ENCODE measurements at regions of chr12 and their contacts with region 1.

Region 1: DNA sequence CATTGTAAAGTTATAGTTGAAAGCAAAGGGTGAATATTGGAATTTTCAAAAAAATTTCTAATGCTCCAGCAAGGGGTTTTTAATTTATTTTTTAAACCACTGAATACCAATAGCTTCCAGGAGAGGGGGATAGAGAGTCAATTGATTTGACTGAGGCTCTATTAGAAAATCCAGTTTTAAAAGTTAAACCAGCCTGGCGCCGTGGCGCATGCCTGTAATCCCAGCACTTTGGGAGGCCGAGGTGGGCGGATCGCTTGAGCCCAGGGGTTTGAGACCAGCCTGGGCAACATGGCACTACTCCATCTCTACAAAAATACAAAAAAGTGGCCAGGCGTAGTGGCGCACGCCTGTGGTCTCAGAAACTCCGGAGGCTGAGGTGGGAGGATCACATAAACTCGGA is 150.1 kb downstream of the SLC38A4 start:
- DNase-seq: peak; percentile 30
- ATAC-seq: no peak
- H3K4me3 ChIP-seq: no peak overlapping the region
- H3K27ac ChIP-seq: no peak overlapping the region
- H3K4me1 ChIP-seq: peaks cover 26% of the 10 kb centered on the region
- H3K27me3 ChIP-seq: no peaks in the 10 kb centered on the region
- CTCF ChIP-seq: peak; percentile 30; the same call in 1 of the 2 replicates
- EP300 ChIP-seq: no peak
- POLR2A ChIP-seq: no peak
- RAD21 ChIP-seq: peak; percentile 45

Region 2: DNA sequence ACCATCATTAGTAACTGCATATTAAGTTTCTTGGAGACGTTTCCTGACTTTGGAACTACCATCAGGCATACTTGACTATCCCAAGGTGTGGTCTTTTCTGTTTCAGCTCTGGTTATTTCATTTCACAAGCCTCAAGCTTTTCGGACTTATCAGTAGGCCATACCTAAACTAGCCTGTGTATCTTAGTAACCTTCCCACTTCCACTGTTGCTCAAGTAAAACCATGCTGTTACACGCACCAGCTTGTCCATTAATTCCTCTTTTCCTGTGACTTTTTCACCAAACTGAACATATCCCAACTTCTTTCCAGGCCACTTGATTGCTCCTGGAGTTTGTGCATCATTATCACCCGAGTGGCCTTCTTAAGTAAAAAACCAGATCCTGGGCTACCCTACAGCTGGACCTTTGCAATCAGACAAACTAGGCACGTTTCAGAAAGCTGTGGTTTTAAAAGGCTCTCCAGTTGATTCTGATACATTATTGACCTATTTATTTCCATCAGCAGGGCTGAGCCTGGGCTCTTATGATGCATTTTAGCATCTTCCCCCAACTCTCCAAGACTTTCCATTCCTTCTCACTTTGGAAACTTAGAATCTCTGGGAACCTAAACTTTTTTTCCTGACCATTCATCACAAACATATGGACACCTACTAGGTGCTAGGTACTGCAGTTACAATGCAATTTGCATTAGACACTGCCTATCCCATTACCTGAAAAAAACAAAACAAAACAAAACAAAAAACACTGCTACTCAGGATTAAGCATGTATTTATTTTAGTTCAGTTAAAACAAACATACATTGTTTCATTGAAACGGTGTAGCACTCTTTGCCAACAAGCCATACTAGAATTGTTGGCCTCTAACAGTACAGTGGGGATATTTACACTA is 318.1 kb before region 1 on chr12:
- CTCF ChIA-PET with region 1: interaction called, 3 read pairs
- POLR2A ChIA-PET with region 1: no interaction called
- in situ Hi-C with region 1: loop called (anchors 5 kb)
- intact Hi-C with region 1: loop called (anchors 5 kb)
- DNase-seq: peak; percentile 75
- ATAC-seq: peak; percentile 59
- H3K4me3 ChIP-seq: no peak overlapping the region
- H3K27ac ChIP-seq: peak overlapping the region; percentile 10
- H3K4me1 ChIP-seq: peaks cover 16% of the 10 kb centered on the region
- H3K27me3 ChIP-seq: no peaks in the 10 kb centered on the region
- CTCF ChIP-seq: no peak
- EP300 ChIP-seq: no peak
- POLR2A ChIP-seq: peak; percentile 71 to 89
- RAD21 ChIP-seq: peak; percentile 60

Region 3: DNA sequence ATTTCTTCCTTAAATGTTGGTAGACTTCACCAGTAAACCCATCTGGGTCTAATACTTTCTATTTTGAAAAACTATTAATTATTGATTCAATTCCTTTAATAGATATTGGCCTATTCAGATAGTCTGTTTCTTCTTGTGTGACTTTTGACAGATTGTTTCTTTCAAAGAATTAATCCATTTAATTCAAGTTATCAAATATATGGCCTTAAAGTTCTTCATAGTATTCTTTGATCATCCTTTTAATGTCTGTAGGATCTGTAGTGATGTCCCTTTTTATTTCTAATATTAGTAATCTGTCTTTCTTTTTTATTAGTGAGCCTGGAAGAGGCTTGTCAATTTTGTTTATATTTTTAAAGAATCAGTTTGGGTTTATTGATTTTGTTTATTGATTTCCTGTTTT is 39.9 kb before region 1 on chr12:
- CTCF ChIA-PET with region 1: no interaction called
- POLR2A ChIA-PET with region 1: no interaction called
- in situ Hi-C with region 1: no loop called
- intact Hi-C with region 1: no loop called
- DNase-seq: no peak
- ATAC-seq: no peak
- H3K4me3 ChIP-seq: no peak overlapping the region
- H3K27ac ChIP-seq: no peak overlapping the region
- H3K4me1 ChIP-seq: peaks cover 9% of the 10 kb centered on the region
- H3K27me3 ChIP-seq: no peaks in the 10 kb centered on the region
- CTCF ChIP-seq: no peak
- EP300 ChIP-seq: no peak
- POLR2A ChIP-seq: no peak
- RAD21 ChIP-seq: no peak

Region 4: DNA sequence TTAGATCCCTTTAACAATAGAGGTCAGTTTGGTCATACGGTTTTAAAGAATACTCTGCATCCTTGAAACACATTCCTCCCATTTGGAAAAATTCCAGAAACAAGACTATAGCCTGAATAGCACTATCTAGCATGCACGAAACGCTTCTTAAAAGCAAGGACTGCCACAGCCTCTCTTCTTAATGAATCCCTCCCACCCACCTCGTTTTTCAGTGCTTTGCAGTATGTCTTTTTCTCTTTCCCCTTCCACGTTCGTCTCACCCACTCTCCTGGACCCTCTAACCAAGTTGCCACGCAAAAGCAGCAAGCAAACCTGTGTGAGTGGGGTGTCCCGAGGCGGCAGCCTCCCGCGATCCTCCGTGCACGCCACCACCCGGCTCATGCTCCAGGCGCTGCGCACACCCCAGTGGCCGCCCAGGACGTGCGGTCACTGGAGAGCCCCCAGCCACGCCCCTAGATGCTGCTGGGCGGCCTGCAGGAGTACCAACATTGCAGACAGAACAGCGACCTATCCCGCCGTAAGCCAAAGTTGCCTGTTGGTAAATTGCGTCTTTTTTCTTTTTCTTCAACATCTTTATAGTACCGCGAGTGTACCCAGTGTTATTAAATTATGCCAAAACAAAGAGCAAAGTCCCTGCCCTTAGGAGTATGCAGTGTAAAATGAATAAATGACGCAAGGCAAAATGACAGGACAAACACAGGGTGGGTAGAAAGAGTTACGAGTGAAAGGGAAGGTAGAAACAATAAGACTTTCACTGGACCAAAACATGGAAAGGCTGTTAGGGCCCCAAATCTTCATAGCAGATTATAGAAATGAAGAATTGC is 150.1 kb after region 1 on chr12 and contains the start of gene SLC38A4:
- CTCF ChIA-PET with region 1: no interaction called
- POLR2A ChIA-PET with region 1: no interaction called
- in situ Hi-C with region 1: no loop called
- intact Hi-C with region 1: loop called (anchors 5 kb)
- DNase-seq: peak; percentile 40
- ATAC-seq: peak; percentile 100
- H3K4me3 ChIP-seq: peak within 1 kb of the TSS; percentile 56 to 74 (median 63)
- H3K27ac ChIP-seq: no peak within 1 kb of the TSS
- H3K4me1 ChIP-seq: peaks cover 42% of the 10 kb centered on the region
- H3K27me3 ChIP-seq: peaks cover 2 to 12% of the 10 kb centered on the region in 2 experiments; a peak in 3 of 5 replicates
- CTCF ChIP-seq: peak; percentile 88
- EP300 ChIP-seq: no peak
- POLR2A ChIP-seq: no peak
- RAD21 ChIP-seq: peak; percentile 76
- total RNA-seq, gene SLC38A4: 2.8 and 3.5 TPM in 2 replicates

Region 5: GRCh38 chr12:46983393-46984266 is 307.9 kb after region 1 on chr12:
- CTCF ChIA-PET with region 1: interaction called, 6 read pairs
- POLR2A ChIA-PET with region 1: no interaction called
- in situ Hi-C with region 1: no loop called
- intact Hi-C with region 1: loop called (anchors 2 kb)
- DNase-seq: peak; percentile 51
- ATAC-seq: peak; percentile 93
- H3K4me3 ChIP-seq: no peak overlapping the region
- H3K27ac ChIP-seq: no peak overlapping the region
- H3K4me1 ChIP-seq: peaks cover 10% of the 10 kb centered on the region; the same call in 1 of the 2 replicates
- H3K27me3 ChIP-seq: 0 out of 5 replicates have a peak, but pooled peaks cover 0 to 3% of the 10 kb centered on the region in 2 experiments
- CTCF ChIP-seq: peak; percentile 84
- EP300 ChIP-seq: no peak
- POLR2A ChIP-seq: no peak
- RAD21 ChIP-seq: peak; percentile 77